ENCODE measurements at regions of chr7 and their contacts with region 1.

Region 1: GRCh38 chr7:47088329-47089067 is 493.4 kb downstream of the TNS3 start:
- DNase-seq: peak; percentile 89
- H3K4me3 ChIP-seq: no peak overlapping the region
- H3K27ac ChIP-seq: no peak overlapping the region
- H3K4me1 ChIP-seq: peaks cover 0 to 12% (median 8%) of the 10 kb centered on the region in 4 donors
- H3K27me3 ChIP-seq: no peaks in the 10 kb centered on the region
- CTCF ChIP-seq: peak; percentile 85 to 89 (median 86)
- EP300 ChIP-seq: no peak
- POLR2A ChIP-seq: no peak

Region 2: DNA sequence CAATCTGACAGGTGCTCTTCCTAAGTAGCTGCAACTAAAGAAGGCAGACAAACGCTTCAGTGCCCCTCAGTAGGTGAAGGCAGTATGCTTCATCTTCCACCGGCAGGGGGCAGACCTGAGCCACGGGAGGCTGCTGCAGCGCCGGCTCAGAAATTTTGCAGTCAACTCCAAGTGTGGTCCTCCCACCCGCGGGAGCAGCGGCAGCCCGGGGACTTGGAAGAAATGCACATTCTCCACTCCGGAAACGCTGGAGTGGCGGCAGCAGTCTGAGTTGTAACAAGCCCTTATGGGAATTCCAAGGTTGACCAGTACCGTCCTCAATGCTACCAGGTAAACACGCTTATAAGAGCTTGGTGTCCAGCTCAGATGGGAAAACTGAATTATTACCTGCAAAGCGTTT is 1170.8 kb before region 1 on chr7:
- intact Hi-C with region 1: loop called (anchors 2 kb)
- DNase-seq: peak; percentile 93
- H3K4me3 ChIP-seq: peak overlapping the region in 3 of 4 donors; percentile 10 to 22 (median 21)
- H3K27ac ChIP-seq: no peak overlapping the region
- H3K4me1 ChIP-seq: peaks cover 26 to 46% (median 42%) of the 10 kb centered on the region in 4 donors
- H3K27me3 ChIP-seq: peaks cover 0 to 74% (median 19%) of the 10 kb centered on the region in 4 donors
- CTCF ChIP-seq: peak; percentile 82 to 97 (median 93)
- EP300 ChIP-seq: no peak
- POLR2A ChIP-seq: no peak

Region 3: GRCh38 chr7:46603780-46604179 is 484.7 kb before region 1 on chr7:
- intact Hi-C with region 1: loop called (anchors 10 kb)
- DNase-seq: peak; percentile 98
- H3K4me3 ChIP-seq: peak overlapping the region in 1 of 4 donors; percentile 19
- H3K27ac ChIP-seq: peak overlapping the region; percentile 82 to 85 (median 84)
- H3K4me1 ChIP-seq: peaks cover 31 to 59% (median 40%) of the 10 kb centered on the region in 4 donors
- H3K27me3 ChIP-seq: no peaks in the 10 kb centered on the region
- CTCF ChIP-seq: no peak
- EP300 ChIP-seq: peak; percentile 97
- POLR2A ChIP-seq: no peak

Region 4: GRCh38 chr7:46776790-46777189 is 311.7 kb before region 1 on chr7:
- intact Hi-C with region 1: loop called (anchors 5 kb)
- DNase-seq: no peak
- H3K4me3 ChIP-seq: no peak overlapping the region
- H3K27ac ChIP-seq: no peak overlapping the region
- H3K4me1 ChIP-seq: peaks cover 30 to 44% (median 39%) of the 10 kb centered on the region in 4 donors
- H3K27me3 ChIP-seq: no peaks in the 10 kb centered on the region
- CTCF ChIP-seq: peak in 2 of 3 experiments; percentile 17 to 32
- EP300 ChIP-seq: no peak
- POLR2A ChIP-seq: no peak

Region 5: DNA sequence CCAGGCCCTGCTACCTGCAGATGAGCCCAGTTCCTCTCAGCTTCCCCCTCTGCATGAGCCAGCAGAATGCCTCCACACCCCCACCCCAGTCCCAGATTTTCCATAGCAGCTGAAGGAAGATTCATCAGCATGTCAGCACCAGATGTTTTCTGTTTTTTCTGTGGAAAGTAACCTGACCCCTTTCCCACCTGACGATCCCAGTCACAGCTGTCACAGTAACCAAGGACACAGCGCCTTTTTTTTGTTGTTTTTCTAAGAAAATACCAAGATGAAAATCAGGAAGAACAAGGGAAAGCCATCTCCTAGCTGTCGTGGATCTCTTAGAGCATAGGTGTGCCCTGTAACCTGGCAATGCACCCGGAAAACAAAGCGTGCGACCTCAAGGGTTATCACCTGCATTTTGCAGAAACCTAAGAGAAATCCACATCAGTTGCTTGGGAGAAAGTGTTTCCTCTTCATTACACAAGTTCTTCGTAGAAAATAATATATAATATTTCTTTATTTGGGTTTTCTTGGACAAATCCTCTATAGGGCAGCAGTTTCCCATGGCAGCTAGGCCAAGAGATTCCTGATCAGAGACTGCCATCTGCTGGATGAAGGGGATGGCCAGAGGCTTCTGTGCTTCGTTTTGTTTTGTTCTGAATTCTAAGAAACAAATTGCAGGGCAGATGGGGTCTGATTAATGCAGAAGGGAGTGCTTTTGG is 91.5 kb after region 1 on chr7:
- intact Hi-C with region 1: loop called (anchors 5 kb)
- DNase-seq: no peak
- H3K4me3 ChIP-seq: no peak overlapping the region
- H3K27ac ChIP-seq: no peak overlapping the region
- H3K4me1 ChIP-seq: peaks cover 25 to 50% (median 48%) of the 10 kb centered on the region in 4 donors
- H3K27me3 ChIP-seq: no peaks in the 10 kb centered on the region
- CTCF ChIP-seq: peak; percentile 82 to 89 (median 84)
- EP300 ChIP-seq: no peak
- POLR2A ChIP-seq: no peak

Region 6: DNA sequence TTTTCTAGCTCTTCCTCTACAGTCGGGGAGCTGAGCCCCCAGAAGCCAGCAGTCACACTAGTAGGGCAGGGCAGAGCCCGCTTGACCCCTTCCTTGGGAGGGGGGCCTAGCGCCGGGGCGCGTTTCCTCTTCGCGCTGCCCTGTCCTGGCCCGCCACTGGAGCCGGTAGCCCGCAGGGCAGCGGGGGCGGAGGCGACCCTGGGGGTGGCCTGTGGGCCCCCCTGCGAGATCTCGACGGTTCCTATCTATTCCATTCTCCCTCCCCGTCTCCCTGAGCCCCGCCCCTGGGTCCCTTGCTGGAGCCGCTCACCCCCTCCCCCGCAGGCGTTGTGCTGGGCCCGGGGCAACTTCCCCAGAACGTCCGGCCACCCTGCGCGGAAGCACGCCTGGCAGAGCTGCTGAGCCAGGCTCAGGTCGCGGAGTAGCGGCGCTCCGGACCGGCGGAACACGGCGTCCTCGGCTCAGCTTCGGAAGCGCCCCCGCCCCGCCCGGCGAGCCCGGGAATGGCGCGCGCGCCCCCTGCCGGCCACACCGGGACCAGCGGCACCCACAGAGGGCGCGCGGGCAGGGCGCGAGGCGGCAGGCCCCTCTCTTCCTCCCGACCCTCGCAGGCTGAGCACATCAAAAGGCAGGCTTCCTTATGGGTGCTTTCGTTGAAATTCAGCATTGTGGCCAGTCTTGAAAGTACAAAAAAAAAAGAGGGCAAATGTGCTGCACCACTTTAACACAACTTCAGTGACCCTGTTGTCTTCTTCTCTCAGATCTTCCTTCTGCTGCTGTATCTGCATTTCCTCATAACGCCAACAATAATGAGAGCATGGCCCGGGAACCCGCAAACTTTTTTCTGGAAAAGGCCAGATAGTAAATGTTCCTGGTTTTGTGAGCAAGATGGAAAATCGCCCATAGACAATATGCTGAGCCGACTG is 165.8 kb after region 1 on chr7:
- intact Hi-C with region 1: loop called (anchors 10 kb)
- DNase-seq: no peak
- H3K4me3 ChIP-seq: peak overlapping the region; percentile 58 to 69 (median 66)
- H3K27ac ChIP-seq: peak overlapping the region; percentile 86 to 92 (median 90)
- H3K4me1 ChIP-seq: peaks cover 13 to 34% (median 30%) of the 10 kb centered on the region in 4 donors
- H3K27me3 ChIP-seq: no peaks in the 10 kb centered on the region
- CTCF ChIP-seq: peak; percentile 94 to 100 (median 98)
- EP300 ChIP-seq: no peak
- POLR2A ChIP-seq: no peak